Adrenal gland (tissue), 19 donors: ENCODE measurements at regions of chr7 and their contacts with region 1.

Region 1: DNA sequence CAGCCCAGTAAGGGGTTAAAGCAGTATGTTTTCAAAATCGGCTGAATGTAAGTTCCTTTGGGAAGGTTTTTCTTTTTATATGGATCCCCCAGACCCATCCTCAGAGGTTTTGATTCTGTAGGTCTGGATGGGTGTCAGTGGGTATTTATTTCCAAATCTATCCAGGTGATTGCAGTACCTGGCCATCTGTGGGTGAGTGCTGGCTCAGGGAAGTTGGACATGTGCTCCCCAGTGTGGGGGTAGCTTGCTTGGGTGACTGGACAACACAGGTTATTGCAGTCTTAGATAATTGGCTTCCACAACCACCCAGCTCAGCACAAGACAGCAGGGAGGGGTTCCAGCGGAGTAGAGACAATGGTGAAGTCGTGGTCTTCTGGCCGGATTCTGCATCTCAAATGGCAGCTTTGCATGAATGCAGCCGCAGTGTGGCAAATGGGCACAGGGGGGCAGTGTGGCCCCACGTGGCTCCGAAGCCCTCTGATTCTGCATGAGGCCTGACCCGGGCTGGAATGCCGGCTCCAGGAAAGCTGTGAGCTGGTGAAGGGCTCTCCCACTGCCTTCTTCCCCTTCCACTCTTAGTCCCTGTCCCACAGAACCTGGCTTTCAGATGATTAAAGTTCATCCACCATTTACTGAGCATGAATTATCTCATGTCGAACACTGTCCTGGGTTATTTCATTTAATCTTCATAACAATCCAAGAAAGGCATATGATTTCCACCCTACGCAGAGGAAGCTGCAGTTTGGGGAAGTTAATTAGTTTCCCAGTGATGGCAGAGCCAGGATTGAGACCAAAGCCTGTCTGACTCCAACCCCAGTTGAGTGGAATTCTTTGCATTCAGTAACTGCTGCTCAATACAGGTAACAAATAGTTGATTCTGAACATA is 64.5 kb upstream of the SYPL1 start:
- DNase-seq: peak; percentile 77 to 95 (median 87)
- H3K4me3 ChIP-seq: no peak overlapping the region
- H3K27ac ChIP-seq: peak overlapping the region in 1 of 5 donors; percentile 60
- H3K4me1 ChIP-seq: no peaks in the 10 kb centered on the region
- H3K27me3 ChIP-seq: no peaks in the 10 kb centered on the region
- CTCF ChIP-seq: peak; percentile 85 to 99 (median 97)
- POLR2A ChIP-seq: peak in 1 of 2 donors; percentile 35

Region 2: DNA sequence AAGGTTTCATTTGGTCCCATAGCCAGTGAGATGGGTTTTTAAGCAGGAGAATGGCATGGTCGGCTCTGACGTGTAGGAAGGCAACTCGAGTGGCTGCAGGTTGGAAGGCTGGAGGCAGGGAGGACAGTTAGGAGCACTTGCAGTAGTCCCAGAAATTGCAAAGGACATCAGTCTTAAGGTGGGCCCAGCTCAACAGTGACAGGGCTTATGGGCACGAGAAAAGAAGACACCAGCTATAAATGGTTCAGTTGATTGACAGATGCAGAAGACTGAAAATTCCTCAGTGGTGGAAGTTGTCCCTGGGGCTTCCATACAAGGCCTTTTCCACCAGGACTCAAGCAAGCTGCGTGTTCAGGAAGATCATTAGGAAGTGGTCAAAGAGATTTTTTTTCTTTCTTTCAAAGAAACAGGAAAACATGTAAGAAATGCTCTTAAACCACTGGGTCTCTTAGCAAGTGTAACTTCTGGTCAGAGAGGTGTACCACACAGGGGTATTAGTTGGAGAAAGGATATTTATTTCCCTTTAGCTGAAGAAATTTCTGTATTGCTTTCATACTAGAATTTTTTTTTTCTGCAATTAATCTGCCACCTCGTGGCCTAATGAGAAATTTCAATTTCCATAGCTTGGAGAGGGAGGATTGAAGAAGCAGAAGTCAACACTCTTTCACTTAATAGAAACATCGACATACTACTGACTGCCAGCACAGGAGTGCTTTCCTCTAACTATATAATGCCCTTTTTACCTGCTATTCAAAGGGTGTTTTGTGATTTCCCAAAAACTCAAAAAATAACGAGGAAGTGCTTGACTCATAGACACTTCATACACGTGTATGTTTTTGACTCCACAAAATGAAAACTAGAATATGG is 285.6 kb after region 1 on chr7:
- intact Hi-C with region 1: loop called (anchors 2 to 5 kb)
- DNase-seq: peak in 1 of 7 donors; percentile 19
- H3K4me3 ChIP-seq: no peak overlapping the region
- H3K27ac ChIP-seq: no peak overlapping the region
- H3K4me1 ChIP-seq: peaks cover 0 to 7% of the 10 kb centered on the region in 2 donors
- H3K27me3 ChIP-seq: no peaks in the 10 kb centered on the region
- CTCF ChIP-seq: peak; percentile 43 to 81 (median 66)
- POLR2A ChIP-seq: no peak

Region 3: GRCh38 chr7:106720641-106721040 is 544.0 kb after region 1 on chr7:
- intact Hi-C with region 1: loop called in 1 of 2 experiments (anchors 10 kb)
- DNase-seq: no peak
- H3K4me3 ChIP-seq: no peak overlapping the region
- H3K27ac ChIP-seq: no peak overlapping the region
- H3K4me1 ChIP-seq: peaks cover 0 to 14% of the 10 kb centered on the region in 2 donors
- H3K27me3 ChIP-seq: no peaks in the 10 kb centered on the region
- CTCF ChIP-seq: no peak
- POLR2A ChIP-seq: no peak